Mucosa of descending colon (tissue), 3 donors: ENCODE measurements at regions of chrX and their contacts with region 1.

Region 1: GRCh38 chrX:120664081-120664480 is 34.2 kb upstream of the C1GALT1C1 start:
- DNase-seq: no peak
- ATAC-seq: no peak
- H3K4me3 ChIP-seq: no peak overlapping the region
- H3K4me1 ChIP-seq: no peaks in the 10 kb centered on the region
- CTCF ChIP-seq: no peak

Region 2: GRCh38 chrX:120499301-120500072 is 164.6 kb before region 1 on chrX:
- intact Hi-C with region 1: loop called in 1 of 2 experiments (anchors 5 kb)
- DNase-seq: no peak
- ATAC-seq: no peak
- H3K4me3 ChIP-seq: no peak overlapping the region
- H3K4me1 ChIP-seq: no peaks in the 10 kb centered on the region
- CTCF ChIP-seq: no peak